CD14-positive monocyte (primary cell): ENCODE measurements at regions of chr3 and their contacts with region 1.

Region 1: DNA sequence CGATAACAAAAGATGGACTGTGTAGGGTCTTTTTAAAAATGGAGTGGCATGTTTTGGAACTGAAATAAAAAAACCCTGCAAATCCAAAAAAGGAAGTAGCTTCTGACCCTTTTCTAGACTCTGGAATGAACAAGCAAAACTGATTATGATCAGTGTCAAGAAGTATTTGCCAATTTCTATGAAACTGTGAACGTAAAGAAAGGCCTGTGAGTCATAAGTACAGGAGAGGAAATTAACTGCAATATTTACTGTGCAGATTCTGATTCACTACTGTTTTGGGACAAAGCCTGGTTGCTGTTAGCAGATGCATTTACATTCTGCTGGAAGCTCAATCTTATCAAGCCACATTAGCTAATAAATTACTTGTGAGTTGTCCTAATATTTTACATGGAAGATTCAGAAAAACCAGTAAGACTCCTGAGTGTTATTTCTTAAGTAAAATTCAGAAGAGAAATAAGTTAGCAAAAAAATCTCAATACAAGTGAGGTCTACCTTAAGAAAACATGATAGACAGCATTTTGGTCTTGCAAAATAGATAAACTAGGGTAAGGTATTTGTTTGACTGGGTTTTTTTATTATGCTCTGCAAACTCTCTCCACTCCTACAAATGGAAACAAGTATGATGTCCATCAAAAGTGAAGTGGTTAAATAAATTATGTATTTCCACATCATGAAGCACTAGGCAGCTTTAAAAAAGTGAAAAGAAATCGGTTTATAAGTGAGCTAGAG is 90.2 kb upstream of the LMOD3 start:
- DNase-seq: peak; percentile 72 to 89 (median 89)
- H3K4me3 ChIP-seq: peak overlapping the region in 1 of 3 experiments; percentile 30
- H3K4me3 Mint-ChIP-seq: no peak overlapping the region
- H3K27ac ChIP-seq: peak overlapping the region; percentile 34 to 84
- H3K27ac Mint-ChIP-seq: peak overlapping the region; percentile 81 to 91 (median 89)
- H3K4me1 ChIP-seq: peaks cover 16 to 21% of the 10 kb centered on the region in 2 donors
- H3K4me1 Mint-ChIP-seq: peaks cover 17% of the 10 kb centered on the region
- H3K27me3 ChIP-seq: no peaks in the 10 kb centered on the region
- H3K27me3 Mint-ChIP-seq: no peaks in the 10 kb centered on the region
- CTCF ChIP-seq: no peak

Region 2: DNA sequence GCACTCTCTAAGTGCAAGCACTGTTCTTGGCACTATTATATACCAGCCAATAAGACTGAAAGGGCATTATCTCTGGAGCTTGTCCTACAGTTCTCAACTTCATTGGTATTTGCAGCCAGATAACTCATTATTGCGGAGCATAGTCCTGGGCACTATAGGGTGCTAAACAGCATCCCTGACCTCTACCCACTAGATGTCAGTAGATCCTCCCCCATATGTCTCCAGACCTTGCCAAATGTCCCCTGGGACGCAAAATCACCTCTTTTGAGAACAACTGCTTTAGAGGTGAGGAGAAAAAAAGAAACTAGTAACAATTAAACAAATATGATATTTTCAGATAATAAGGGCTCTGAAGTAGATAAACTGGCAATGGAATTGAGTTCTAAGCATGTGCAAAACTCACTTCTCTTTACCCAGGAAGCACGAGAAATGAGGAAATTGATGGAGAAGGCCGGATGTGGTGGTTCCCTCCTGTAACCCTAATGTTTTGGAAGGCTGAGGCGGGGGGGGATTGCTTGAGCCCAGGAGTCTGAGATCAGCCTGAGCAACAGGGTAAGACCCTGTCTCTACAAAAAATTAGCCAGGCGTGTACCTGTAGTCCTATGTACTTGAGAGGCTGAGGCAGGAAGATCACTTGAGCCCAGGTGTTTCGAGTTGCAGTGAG is 111.9 kb after region 1 on chr3:
- intact Hi-C with region 1: loop called in 1 of 2 experiments (anchors 10 kb)
- DNase-seq: peak; percentile 30 to 73 (median 71)
- H3K4me3 ChIP-seq: peak overlapping the region in 1 of 3 experiments; percentile 42
- H3K4me3 Mint-ChIP-seq: peak overlapping the region; percentile 48 to 72
- H3K27ac ChIP-seq: peak overlapping the region in 1 of 2 donors; percentile 29
- H3K27ac Mint-ChIP-seq: peak overlapping the region; percentile 68 to 83 (median 75)
- H3K4me1 ChIP-seq: peaks cover 63 to 76% of the 10 kb centered on the region in 2 donors
- H3K4me1 Mint-ChIP-seq: peaks cover 74% of the 10 kb centered on the region
- H3K27me3 ChIP-seq: no peaks in the 10 kb centered on the region
- H3K27me3 Mint-ChIP-seq: peaks cover 0 to 1% (median 0%) of the 10 kb centered on the region in 3 donors
- CTCF ChIP-seq: peak; percentile 43